ENCODE measurements at regions of chr3 and their contacts with region 1.

Region 1: GRCh38 chr3:158644345-158644908 is at the start of gene GFM1:
- DNase-seq: peak; percentile 93
- H3K4me3 Mint-ChIP-seq: peak within 1 kb of the TSS; percentile 93
- H3K27ac Mint-ChIP-seq: peak within 1 kb of the TSS; percentile 81
- H3K4me1 Mint-ChIP-seq: peaks cover 30% of the 10 kb centered on the region
- H3K27me3 Mint-ChIP-seq: no peaks in the 10 kb centered on the region

Region 2: DNA sequence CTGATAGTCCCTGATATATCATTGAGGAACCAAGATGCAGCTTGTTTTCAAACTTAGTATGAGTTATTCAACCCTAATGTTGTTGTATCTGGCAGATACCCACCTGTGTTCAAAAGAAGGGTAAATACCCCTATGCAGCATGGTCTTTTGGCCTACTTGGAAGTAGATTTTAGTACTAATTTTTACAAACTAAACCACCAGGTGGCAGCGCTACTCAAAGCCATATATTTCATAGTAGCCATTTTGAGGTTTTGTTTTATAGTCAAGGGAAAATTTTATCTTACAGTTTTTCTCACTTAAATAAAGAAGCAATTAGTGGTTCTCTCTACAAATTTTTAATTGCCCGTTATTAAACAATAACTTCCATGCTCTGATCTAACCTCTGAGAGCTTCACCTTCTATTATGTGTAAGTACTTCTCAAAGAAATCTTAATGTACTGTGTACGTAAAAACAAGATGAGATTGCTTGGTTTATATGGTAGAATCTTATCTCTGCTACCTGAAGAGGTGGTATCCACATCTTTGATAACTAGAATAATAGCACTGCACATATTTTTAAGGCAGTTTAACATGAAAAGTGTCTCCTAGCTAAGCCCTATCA is 104.9 kb before region 1 on chr3:
- CTCF ChIA-PET with region 1: interaction called, 13 read pairs
- DNase-seq: peak; percentile 50
- H3K4me3 Mint-ChIP-seq: no peak overlapping the region
- H3K27ac Mint-ChIP-seq: no peak overlapping the region
- H3K4me1 Mint-ChIP-seq: no peaks in the 10 kb centered on the region
- H3K27me3 Mint-ChIP-seq: no peaks in the 10 kb centered on the region

Region 3: GRCh38 chr3:158672293-158673176 is 28.1 kb after region 1 on chr3 and contains the start of gene LXN:
- CTCF ChIA-PET with region 1: interaction called, 14 read pairs
- DNase-seq: peak; percentile 91
- H3K4me3 Mint-ChIP-seq: peak within 1 kb of the TSS; percentile 83
- H3K27ac Mint-ChIP-seq: peak within 1 kb of the TSS; percentile 84
- H3K4me1 Mint-ChIP-seq: peaks cover 26% of the 10 kb centered on the region
- H3K27me3 Mint-ChIP-seq: no peaks in the 10 kb centered on the region